Breast epithelium (tissue), 4 donors: ENCODE measurements at regions of chr4 and their contacts with region 1.

Region 1: DNA sequence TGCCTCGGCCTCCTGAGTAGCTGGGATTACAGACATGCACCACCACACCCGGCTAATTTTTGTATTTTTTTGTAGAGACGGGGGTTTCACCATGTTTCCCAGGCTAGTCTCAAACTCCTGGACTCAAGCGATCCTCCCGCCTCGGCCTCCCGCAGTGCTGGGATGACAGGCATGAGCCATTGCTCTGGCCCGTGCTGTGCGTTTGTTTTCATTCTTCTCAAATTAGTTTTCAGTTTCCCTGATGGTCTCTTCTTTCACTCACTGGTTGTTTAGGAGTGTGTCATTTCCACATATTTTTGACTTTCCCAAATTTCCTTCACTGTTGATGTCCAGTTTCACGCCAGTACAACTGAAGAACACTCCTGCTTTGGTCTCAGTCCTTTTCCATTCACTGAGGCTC is 31.8 kb downstream of the SH3TC1 start:
- DNase-seq: no peak
- H3K4me3 ChIP-seq: no peak overlapping the region
- H3K27ac ChIP-seq: no peak overlapping the region
- H3K4me1 ChIP-seq: peaks cover 0 to 6% of the 10 kb centered on the region in 2 donors
- H3K27me3 ChIP-seq: no peaks in the 10 kb centered on the region
- CTCF ChIP-seq: no peak
- POLR2A ChIP-seq: no peak

Region 2: GRCh38 chr4:8182858-8183725 is 47.8 kb before region 1 on chr4:
- intact Hi-C with region 1: no loop called
- DNase-seq: peak in 1 of 2 donors; percentile 35
- H3K4me3 ChIP-seq: no peak overlapping the region
- H3K27ac ChIP-seq: no peak overlapping the region
- H3K4me1 ChIP-seq: peaks cover 0 to under 1% of the 10 kb centered on the region in 2 donors
- H3K27me3 ChIP-seq: no peaks in the 10 kb centered on the region
- CTCF ChIP-seq: no peak
- POLR2A ChIP-seq: no peak

Region 3: DNA sequence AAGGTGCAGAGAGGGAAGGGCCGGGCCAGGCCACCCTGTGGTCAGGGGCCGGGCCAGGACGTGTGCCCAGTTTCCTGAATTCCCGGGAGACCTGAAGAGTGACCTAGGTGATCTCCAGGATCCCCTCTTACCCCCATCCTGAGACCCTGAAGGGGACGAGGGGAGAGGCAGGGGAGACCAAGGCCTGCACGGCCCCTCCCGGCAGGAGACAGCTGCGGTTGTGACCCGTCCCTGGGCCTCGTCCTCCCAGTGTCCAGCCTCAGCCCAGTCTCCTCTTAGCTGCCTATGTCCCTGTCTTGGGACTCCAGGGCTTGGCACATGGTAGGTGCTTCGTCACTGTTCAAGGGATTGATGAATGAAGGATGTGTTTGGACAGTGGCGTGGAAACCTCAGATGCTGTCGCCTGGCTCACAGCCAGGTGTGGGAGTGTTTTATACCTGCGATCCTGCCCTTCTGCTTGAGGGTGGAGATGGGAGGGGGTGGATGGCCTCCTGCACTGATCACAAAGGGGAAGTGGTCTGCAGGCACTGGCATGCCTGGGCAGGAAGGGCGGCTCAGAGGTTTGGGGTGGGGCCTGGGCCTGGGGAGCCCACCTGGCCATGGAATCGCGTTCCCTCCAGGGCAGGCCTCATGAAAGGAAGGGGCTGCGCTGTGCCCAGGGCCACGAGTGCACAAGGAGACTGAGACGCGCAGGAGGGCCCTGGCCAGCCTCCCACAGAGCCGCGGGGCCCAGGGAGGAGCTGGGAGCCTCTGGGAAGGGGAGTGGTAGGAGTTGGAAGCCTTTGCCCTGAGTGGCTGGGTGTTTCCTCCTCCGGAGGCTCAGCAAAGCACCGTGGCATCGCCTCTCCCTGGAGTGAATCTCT is 24.9 kb before region 1 on chr4:
- intact Hi-C with region 1: loop called (anchors 1 kb)
- DNase-seq: no peak
- H3K4me3 ChIP-seq: no peak overlapping the region
- H3K27ac ChIP-seq: peak overlapping the region; percentile 10 to 38
- H3K4me1 ChIP-seq: peaks cover 0 to 8% of the 10 kb centered on the region in 2 donors
- H3K27me3 ChIP-seq: no peaks in the 10 kb centered on the region
- CTCF ChIP-seq: no peak
- POLR2A ChIP-seq: no peak

Region 4: DNA sequence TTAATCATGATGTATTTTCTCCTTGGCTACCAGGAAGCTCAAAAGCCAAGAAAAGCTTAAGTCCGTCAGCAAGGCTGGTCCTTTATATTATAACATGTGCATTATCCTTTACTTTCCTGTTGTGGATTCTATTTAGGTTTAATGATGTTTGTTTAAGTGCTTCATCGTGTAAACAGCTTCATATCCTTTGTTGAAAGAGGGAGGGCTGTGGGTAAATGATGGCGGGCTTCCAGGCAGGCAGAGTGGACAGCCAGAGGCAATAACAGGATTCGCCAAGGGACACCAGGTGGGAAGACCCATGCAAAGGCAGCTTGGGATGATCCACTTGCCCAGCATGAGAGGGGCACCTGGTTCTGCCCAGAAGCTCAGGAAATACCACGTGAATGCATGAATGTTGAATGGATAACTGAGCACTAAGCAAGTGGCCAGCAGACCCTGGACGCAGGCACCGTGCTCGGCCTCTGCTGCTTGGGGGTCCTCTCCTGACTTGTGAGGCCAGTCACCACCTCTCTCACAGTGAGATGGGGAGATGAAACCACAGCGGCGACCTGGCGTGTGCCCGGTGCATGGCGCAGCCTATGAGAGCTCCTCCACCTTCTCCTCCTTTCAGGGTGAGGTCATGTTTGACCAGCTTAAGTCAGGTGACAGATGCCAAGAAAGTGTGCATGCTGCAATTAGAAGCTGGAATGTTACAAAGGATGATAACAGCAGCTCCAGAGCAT is 565.0 kb after region 1 on chr4:
- intact Hi-C with region 1: no loop called
- DNase-seq: no peak
- H3K4me3 ChIP-seq: no peak overlapping the region
- H3K27ac ChIP-seq: no peak overlapping the region
- H3K4me1 ChIP-seq: no peaks in the 10 kb centered on the region
- H3K27me3 ChIP-seq: peaks cover 0 to 7% of the 10 kb centered on the region in 2 donors
- CTCF ChIP-seq: no peak
- POLR2A ChIP-seq: no peak